H1 (cell line): ENCODE measurements at regions of chr10 and their contacts with region 1.

Region 1: GRCh38 chr10:104274762-104275721 is 6.1 kb downstream of the GSTO2 start:
- DNase-seq: peak; percentile 46 to 91
- H3K4me3 ChIP-seq: peak overlapping the region; percentile 45 to 66 (median 54)
- H3K27ac ChIP-seq: no peak overlapping the region
- H3K4me1 ChIP-seq: peaks cover 0 to 1% (median 0%) of the 10 kb centered on the region in 4 experiments; a peak in 2 of 7 replicates
- H3K27me3 ChIP-seq: peaks cover 0 to 7% (median 2%) of the 10 kb centered on the region in 4 experiments; a peak in 2 of 7 replicates
- CTCF ChIP-seq: peak; percentile 87 to 92 (median 91)
- EP300 ChIP-seq: peak in 1 of 2 experiments; percentile 71; a peak in 1 of 3 replicates
- POLR2A ChIP-seq: peak in 1 of 2 experiments; percentile 64; a peak in 2 of 3 replicates
- RAD21 ChIP-seq: peak; percentile 63 to 73

Region 2: GRCh38 chr10:104028146-104028545 is 246.9 kb before region 1 on chr10:
- CTCF ChIA-PET with region 1: interaction called, 11 read pairs
- POLR2A ChIA-PET with region 1: interaction called, 3 read pairs
- DNase-seq: peak in 1 of 2 experiments; percentile 41
- H3K4me3 ChIP-seq: no peak overlapping the region
- H3K27ac ChIP-seq: no peak overlapping the region
- H3K4me1 ChIP-seq: peaks cover 3 to 15% (median 7%) of the 10 kb centered on the region in 4 experiments; a peak in 5 of 7 replicates
- H3K27me3 ChIP-seq: no peaks in the 10 kb centered on the region
- CTCF ChIP-seq: peak; percentile 44 to 75 (median 72)
- EP300 ChIP-seq: no peak
- POLR2A ChIP-seq: no peak
- RAD21 ChIP-seq: peak; percentile 50 to 61

Region 3: GRCh38 chr10:104080762-104081161 is 194.3 kb before region 1 on chr10:
- CTCF ChIA-PET with region 1: no interaction called
- POLR2A ChIA-PET with region 1: no interaction called
- DNase-seq: no peak
- H3K4me3 ChIP-seq: no peak overlapping the region
- H3K27ac ChIP-seq: no peak overlapping the region
- H3K4me1 ChIP-seq: peaks cover 6 to 11% (median 9%) of the 10 kb centered on the region in 4 experiments
- H3K27me3 ChIP-seq: no peaks in the 10 kb centered on the region
- CTCF ChIP-seq: peak in 1 of 3 experiments; percentile 13; a peak in 1 of 4 replicates
- EP300 ChIP-seq: no peak
- POLR2A ChIP-seq: no peak
- RAD21 ChIP-seq: 0 out of 4 replicates have a peak, but pooled peaks of 1 of the 2 experiments have one; percentile 18

Region 4: GRCh38 chr10:104254493-104255310 is 20.3 kb before region 1 on chr10 and contains the start of gene GSTO1:
- CTCF ChIA-PET with region 1: interaction called, 21 read pairs
- POLR2A ChIA-PET with region 1: interaction called, 81 read pairs
- DNase-seq: peak in 1 of 2 experiments; percentile 67
- H3K4me3 ChIP-seq: peak within 1 kb of the TSS; percentile 70 to 76 (median 73)
- H3K27ac ChIP-seq: no peak within 1 kb of the TSS
- H3K4me1 ChIP-seq: peaks cover 5 to 22% (median 18%) of the 10 kb centered on the region in 4 experiments
- H3K27me3 ChIP-seq: peaks cover 0 to 9% (median 5%) of the 10 kb centered on the region in 4 experiments; a peak in 5 of 7 replicates
- CTCF ChIP-seq: no peak
- EP300 ChIP-seq: no peak
- POLR2A ChIP-seq: no peak
- RAD21 ChIP-seq: no peak
- total RNA-seq, gene GSTO1: 32.5 and 33.8 TPM in 2 replicates

Region 5: DNA sequence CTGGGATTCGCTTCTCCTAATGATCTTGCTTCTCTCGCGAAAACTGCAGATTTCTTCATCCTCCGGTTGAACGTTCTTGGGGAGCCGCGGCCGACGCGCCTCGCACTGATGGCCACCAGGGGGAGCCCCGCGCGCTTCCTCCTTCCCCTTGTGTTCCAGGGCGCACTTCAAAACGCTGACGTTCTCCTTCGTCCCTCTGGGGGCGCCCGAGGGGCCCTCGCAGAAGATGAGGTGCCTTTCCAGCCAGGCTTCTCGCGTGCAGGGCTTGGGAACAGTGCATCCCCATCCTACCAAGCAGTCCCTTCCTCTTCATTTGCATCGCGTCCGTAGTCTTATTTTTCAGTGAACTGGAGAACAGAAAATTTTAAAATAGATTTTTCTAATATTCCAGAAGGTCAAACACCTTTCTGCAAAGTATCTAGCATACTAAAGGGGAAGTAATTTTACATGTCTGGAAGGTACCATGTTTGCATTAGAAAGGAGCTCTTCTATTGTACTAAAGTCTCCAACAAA is 16.5 kb after region 1 on chr10:
- CTCF ChIA-PET with region 1: interaction called, 65 read pairs
- POLR2A ChIA-PET with region 1: interaction called, 10 read pairs
- DNase-seq: peak; percentile 62 to 95
- H3K4me3 ChIP-seq: peak overlapping the region in 3 of 4 experiments; percentile 4 to 31 (median 23); a peak in 3 of 8 replicates
- H3K27ac ChIP-seq: no peak overlapping the region
- H3K4me1 ChIP-seq: peaks cover 0 to 3% (median 2%) of the 10 kb centered on the region in 4 experiments; a peak in 3 of 7 replicates
- H3K27me3 ChIP-seq: no peaks in the 10 kb centered on the region
- CTCF ChIP-seq: peak; percentile 99 to 100 (median 99)
- EP300 ChIP-seq: no peak
- POLR2A ChIP-seq: no peak
- RAD21 ChIP-seq: peak; percentile 79 to 86

Region 6: GRCh38 chr10:104308439-104308903 is 33.4 kb after region 1 on chr10:
- CTCF ChIA-PET with region 1: interaction called, 26 read pairs
- POLR2A ChIA-PET with region 1: no interaction called
- DNase-seq: no peak
- H3K4me3 ChIP-seq: no peak overlapping the region
- H3K27ac ChIP-seq: no peak overlapping the region
- H3K4me1 ChIP-seq: peaks cover 0 to 7% (median 3%) of the 10 kb centered on the region in 4 experiments; a peak in 3 of 7 replicates
- H3K27me3 ChIP-seq: no peaks in the 10 kb centered on the region
- CTCF ChIP-seq: no peak
- EP300 ChIP-seq: no peak
- POLR2A ChIP-seq: no peak
- RAD21 ChIP-seq: no peak

Region 7: GRCh38 chr10:104353325-104354048 is 78.4 kb after region 1 on chr10 and contains the start of gene CFAP58:
- CTCF ChIA-PET with region 1: interaction called, 146 read pairs
- POLR2A ChIA-PET with region 1: interaction called, 5 read pairs
- DNase-seq: peak; percentile 79 to 98
- H3K4me3 ChIP-seq: peak within 1 kb of the TSS; percentile 35 to 71 (median 52); a peak in 7 of 8 replicates
- H3K27ac ChIP-seq: no peak within 1 kb of the TSS
- H3K4me1 ChIP-seq: peaks cover 0 to 9% (median 1%) of the 10 kb centered on the region in 4 experiments; a peak in 2 of 7 replicates
- H3K27me3 ChIP-seq: peaks cover 5 to 13% (median 10%) of the 10 kb centered on the region in 4 experiments
- CTCF ChIP-seq: peak; percentile 67 to 80 (median 69)
- EP300 ChIP-seq: no peak
- POLR2A ChIP-seq: no peak
- RAD21 ChIP-seq: peak; percentile 12 to 27; a peak in 2 of 4 replicates
- total RNA-seq, gene CFAP58: 0.71 and 1.1 TPM in 2 replicates